ENCODE measurements at regions of chr7 and their contacts with region 1.

Region 1: GRCh38 chr7:66167773-66168387 is 37.3 kb upstream of the TPST1 start:
- DNase-seq: no peak
- H3K4me3 ChIP-seq: no peak overlapping the region
- H3K27ac ChIP-seq: no peak overlapping the region
- H3K4me1 ChIP-seq: peaks cover 10 to 16% of the 10 kb centered on the region in 2 donors
- H3K27me3 ChIP-seq: no peaks in the 10 kb centered on the region
- CTCF ChIP-seq: no peak
- POLR2A ChIP-seq: no peak

Region 2: GRCh38 chr7:66043681-66044497 is 124.0 kb before region 1 on chr7:
- intact Hi-C with region 1: no loop called
- DNase-seq: peak; percentile 63 to 72
- H3K4me3 ChIP-seq: peak overlapping the region; percentile 32 to 66 (median 51)
- H3K27ac ChIP-seq: no peak overlapping the region
- H3K4me1 ChIP-seq: peaks cover 2 to 6% of the 10 kb centered on the region in 2 donors
- H3K27me3 ChIP-seq: no peaks in the 10 kb centered on the region
- CTCF ChIP-seq: no peak
- POLR2A ChIP-seq: no peak

Region 3: DNA sequence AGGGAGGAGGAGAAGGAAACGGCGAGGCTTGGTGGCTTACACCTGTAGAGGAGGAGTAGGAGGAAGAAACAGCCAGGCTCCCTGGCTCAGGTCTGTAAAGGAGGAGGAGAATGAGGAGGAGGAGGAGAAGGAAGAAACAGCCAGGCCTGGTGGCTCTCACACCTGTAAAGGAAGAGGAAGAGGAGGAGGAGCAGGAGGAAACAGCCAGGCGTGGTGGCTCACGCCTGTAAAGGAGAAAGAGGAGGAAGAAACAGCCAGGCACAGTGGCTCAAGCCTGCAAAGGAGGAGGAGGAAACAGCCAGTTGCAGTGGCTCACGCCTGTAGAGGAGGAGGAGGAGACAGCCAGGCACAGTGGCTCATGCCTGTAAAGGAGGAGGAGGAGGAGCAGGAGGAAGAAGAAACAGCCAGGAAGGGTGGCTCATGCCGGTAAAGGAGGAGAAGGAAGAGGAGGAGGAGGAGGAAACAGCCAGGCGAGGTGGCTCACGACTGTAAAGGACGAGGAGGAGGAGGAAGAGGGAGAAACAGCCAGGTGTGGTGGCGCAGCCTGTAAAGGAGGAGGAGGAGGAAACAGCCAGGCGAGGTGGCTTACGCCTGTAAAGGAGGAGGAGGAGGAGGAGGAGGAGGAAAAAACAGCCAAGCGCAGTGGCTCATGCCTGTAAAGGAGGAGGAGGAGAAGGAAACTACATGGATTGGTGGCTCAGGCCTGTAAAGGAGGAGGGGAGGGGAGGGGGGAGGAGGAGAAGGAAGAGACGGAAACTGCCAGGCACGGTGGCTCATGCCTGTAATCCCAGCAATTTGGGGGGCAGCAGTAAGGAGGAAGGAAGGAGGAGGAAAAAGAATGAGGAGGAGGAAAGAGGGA is 68.0 kb before region 1 on chr7:
- intact Hi-C with region 1: loop called (anchors 10 kb)
- DNase-seq: peak; percentile 87
- H3K4me3 ChIP-seq: peak overlapping the region in 2 of 3 donors; percentile 8 to 10
- H3K27ac ChIP-seq: peak overlapping the region; percentile 81 to 98 (median 89)
- H3K4me1 ChIP-seq: peaks cover 4 to 13% of the 10 kb centered on the region in 2 donors
- H3K27me3 ChIP-seq: no peaks in the 10 kb centered on the region
- CTCF ChIP-seq: no peak
- POLR2A ChIP-seq: peak in 1 of 2 donors; percentile 81